ENCODE measurements at regions of chr3 and their contacts with region 1.

Region 1: DNA sequence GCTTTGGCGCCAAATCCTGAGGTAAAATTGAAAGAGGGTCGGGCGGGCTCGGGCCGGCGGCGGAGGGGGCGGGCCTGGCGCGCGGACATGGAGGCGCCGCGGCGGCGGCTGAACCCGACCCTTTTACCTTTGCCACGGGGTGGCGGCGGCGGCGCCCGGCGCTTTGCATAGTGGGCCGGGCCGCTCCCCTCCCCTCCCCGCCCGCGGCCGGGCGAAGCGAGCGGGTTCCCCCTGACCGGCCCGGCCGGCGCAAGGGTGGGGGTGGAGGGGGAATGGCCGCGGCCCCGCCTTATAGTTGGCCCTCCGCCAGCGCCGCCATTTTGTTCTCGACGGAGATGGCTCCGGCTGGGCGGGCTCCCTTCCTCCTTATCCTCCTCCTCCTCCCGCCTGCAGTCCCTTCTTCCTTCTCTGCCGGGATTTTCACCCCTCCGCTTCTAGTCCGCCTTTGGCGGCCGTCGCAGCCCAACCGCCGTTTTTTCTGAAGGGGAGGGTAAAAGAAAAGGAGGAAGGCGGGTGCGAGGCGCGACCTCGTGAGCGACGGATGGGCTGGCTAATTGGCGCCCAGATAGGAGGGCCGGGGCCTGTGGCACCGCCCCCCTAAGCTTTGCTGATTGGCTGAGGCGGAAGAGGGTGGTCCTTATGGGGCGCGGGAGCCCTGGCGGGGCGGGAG is 638 bp downstream of the NR2C2 start:
- DNase-seq: peak; percentile 99
- H3K4me3 Mint-ChIP-seq: peak overlapping the region; percentile 100
- H3K27ac Mint-ChIP-seq: peak overlapping the region; percentile 100
- H3K4me1 Mint-ChIP-seq: peaks cover 32% of the 10 kb centered on the region
- H3K27me3 Mint-ChIP-seq: no peaks in the 10 kb centered on the region

Region 2: DNA sequence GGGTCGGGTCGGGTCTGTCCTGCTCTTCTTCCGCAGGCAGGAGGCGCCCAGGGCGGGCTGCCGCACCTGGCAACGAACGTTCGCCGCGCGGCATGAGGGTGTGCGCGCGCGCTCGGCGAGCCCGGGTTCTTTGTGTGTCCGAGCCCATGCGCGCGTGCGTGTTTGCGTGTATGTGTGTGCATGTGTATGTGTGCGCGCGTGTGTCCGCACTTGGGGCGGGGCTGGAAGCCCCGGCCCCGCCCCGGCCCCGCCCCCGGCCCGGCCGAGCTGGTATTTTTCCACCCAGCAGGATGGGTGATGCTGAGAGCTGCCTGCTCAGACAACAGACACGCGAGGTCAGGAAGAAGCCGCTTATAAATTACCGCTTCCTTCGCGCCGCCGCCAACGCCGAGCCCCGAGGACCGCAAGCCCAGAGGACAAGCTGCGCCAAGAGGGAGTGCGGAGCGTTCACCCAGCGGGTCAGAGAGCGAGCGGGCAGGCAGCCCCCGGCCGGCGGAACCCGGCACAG is 545.7 kb before region 1 on chr3 and contains the start of gene SLC6A6:
- intact Hi-C with region 1: loop called (anchors 10 kb)
- DNase-seq: peak; percentile 98
- H3K4me3 Mint-ChIP-seq: peak within 1 kb of the TSS; percentile 99
- H3K27ac Mint-ChIP-seq: peak within 1 kb of the TSS; percentile 97
- H3K4me1 Mint-ChIP-seq: peaks cover 43% of the 10 kb centered on the region
- H3K27me3 Mint-ChIP-seq: no peaks in the 10 kb centered on the region
- total RNA-seq, gene SLC6A6: 53.9 and 63.7 TPM in 2 replicates

Region 3: GRCh38 chr3:14651440-14652251 is 296.4 kb before region 1 on chr3 and contains the start of gene CCDC174:
- intact Hi-C with region 1: loop called (anchors 1 kb)
- DNase-seq: peak; percentile 99
- H3K4me3 Mint-ChIP-seq: peak within 1 kb of the TSS; percentile 100
- H3K27ac Mint-ChIP-seq: peak within 1 kb of the TSS; percentile 95
- H3K4me1 Mint-ChIP-seq: peaks cover 38% of the 10 kb centered on the region
- H3K27me3 Mint-ChIP-seq: peaks cover 3% of the 10 kb centered on the region
- total RNA-seq, gene CCDC174: 16.0 and 16.8 TPM in 2 replicates

Region 4: DNA sequence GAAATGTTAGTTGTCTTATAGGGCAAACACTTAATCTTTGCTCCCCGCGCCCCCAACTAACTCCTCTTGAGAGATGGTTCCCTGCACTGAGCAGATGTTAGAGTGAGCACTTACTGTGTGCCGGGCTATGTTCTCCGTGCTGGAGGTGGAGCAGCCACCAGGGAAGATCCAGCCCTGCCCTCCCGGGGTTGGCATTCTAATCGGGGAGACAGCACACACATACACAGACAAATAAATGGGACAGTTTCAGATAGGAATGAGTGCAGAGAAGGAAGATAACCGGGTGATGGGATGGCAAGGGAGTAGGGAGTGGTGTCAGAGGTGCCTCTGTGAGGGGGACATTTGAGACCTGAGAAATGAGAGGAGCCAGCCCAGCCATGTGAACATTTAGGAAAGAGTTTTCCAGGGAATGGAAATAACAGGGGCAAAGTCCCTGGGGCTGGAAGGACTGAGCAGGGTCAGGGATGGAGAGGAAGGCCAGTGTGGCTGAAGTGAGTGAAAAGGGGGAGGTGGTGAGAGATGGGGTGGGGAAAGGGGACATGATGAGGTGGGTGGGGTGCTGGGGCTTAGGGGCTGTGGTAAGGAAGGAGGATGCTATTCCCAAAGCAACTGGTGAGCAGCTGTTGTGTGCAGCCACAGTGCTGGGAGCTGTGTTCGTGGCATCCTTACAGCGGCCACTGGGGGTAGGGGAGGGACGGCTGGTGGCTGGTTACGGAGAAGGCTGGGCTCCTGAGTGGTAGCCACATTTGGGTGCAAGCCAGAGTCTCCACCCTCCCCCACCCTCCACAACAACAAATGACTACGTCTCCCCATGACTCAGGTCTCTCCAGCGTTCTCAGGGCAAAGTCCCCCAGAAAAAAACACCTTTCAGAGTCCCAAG is 144.7 kb before region 1 on chr3:
- intact Hi-C with region 1: no loop called
- DNase-seq: no peak
- H3K4me3 Mint-ChIP-seq: no peak overlapping the region
- H3K27ac Mint-ChIP-seq: no peak overlapping the region
- H3K4me1 Mint-ChIP-seq: peaks cover 14% of the 10 kb centered on the region
- H3K27me3 Mint-ChIP-seq: peaks cover 28% of the 10 kb centered on the region

Region 5: DNA sequence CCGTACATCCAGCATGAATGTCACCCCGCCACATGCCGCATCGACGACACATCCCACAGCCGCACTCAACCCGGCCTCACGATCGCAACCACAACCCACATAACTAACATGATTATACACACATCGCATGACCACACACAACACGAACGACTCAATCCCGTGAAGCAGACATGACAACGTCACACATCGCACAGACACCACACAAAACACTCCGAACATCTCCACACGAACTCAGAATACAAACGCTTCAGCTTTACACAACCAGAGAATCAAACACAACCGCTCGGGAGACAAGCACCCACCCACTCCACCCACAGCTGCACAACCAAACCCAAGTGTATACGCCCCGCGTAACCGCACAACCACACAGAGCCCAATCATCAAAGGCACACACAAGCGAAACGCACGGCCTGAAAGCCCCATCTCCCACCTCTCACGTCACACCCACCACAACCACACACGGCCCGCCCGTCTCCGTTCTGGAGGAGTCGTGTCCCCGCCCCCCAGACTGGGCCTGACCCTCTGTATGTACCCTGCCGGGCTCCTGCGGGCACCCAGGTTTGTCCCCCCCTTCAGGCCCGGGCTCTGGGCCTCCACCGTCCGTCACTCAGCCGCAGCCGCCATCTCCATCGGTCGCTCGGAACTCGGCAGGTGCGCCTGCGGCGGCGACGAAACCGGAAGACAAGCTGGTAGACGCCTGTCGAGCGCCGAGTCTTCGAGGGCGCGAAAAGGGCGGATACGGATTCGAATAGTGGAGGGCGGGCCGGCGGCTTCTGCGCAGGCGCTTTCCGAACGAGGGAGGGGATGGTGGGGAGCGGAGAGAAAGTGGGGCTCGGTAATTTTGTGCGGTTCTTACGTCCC is 150.7 kb after region 1 on chr3 and contains the start of gene RBSN:
- intact Hi-C with region 1: loop called (anchors 1 kb)
- DNase-seq: peak; percentile 99
- H3K4me3 Mint-ChIP-seq: peak within 1 kb of the TSS; percentile 90
- H3K27ac Mint-ChIP-seq: peak within 1 kb of the TSS; percentile 93
- H3K4me1 Mint-ChIP-seq: peaks cover 29% of the 10 kb centered on the region
- H3K27me3 Mint-ChIP-seq: no peaks in the 10 kb centered on the region
- total RNA-seq, gene RBSN: 13.2 and 15.0 TPM in 2 replicates

Region 6: DNA sequence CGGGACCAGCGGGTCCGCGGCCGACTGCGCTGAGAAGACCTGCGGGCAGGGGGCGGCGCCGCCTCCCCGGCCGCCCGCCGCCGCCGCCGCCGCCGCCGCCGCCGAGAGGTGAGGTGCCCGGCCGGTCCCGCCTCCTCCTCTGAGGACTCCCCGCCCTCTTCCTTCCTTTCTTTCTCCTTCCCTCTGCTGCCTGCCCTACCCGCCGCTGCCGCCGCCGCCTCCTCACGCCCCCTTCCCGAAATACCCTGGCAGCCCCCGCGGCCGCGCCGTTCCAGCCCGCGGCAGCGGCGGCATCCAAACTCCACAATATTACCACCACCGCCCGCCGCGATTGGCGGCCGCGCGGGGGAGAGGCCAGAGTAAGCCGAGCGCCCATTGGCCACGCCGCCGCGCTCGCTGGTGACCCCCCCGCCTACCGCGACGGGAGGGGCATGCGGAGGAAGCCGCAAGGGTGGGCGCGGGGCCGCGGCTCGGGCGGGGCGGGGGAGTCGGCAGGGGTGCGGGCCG is 911.5 kb after region 1 on chr3:
- intact Hi-C with region 1: loop called (anchors 2 kb)
- DNase-seq: peak; percentile 94
- H3K4me3 Mint-ChIP-seq: peak overlapping the region; percentile 92
- H3K27ac Mint-ChIP-seq: peak overlapping the region; percentile 96
- H3K4me1 Mint-ChIP-seq: peaks cover 25% of the 10 kb centered on the region
- H3K27me3 Mint-ChIP-seq: peaks cover 9% of the 10 kb centered on the region